ENCODE measurements at regions of chr20 and their contacts with region 1.

Region 1: GRCh38 chr20:5749952-5750779 is at the start of gene SHLD1:
- DNase-seq: peak; percentile 83 to 96
- H3K4me3 ChIP-seq: peak within 1 kb of the TSS; percentile 64 to 70 (median 67)
- H3K27ac ChIP-seq: peak within 1 kb of the TSS; percentile 75 to 94 (median 93)
- H3K4me1 ChIP-seq: peaks cover 8 to 20% (median 13%) of the 10 kb centered on the region in 4 donors
- H3K27me3 ChIP-seq: no peaks in the 10 kb centered on the region
- CTCF ChIP-seq: no peak
- EP300 ChIP-seq: no peak
- POLR2A ChIP-seq: no peak
- total RNA-seq, gene SHLD1: 1.3 to 3.5 (median 2.4) TPM in 4 of 5 donors, not detected in the other

Region 2: DNA sequence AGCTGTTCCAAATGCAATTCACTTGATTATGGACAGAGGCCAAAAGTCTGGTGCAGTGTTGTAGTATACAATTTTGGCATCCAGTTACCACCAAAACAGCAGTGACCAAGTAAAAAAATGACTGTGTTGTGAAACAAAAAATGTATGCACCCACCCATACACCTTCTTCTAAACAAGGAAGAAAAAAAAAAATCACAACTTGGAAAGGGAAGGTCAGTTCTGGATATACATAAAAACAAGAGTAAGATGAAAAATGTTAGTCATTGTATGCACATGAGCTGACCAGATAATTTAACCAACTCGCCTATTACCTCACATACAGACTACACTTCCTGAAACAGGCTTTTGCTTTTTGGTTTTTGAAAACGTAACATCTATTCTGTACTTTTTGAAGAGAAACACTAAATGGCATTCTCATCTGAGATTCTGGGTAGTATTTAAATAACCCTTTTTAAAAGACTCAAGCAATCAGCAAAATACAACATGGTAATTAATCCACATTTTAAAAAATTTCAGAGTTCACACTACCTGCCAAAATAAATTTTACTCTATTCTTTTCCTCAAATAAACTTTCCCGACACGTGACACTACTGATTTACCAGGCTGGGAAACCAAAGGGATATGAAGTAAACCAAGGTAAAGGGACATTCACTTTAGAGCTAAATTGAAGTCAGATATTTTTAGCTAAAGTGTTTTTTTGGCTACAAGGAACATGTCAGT is 141.6 kb before region 1 on chr20:
- intact Hi-C with region 1: loop called (anchors 10 kb)
- DNase-seq: peak in 1 of 2 donors; percentile 52
- H3K4me3 ChIP-seq: peak overlapping the region; percentile 18 to 88 (median 60)
- H3K27ac ChIP-seq: peak overlapping the region in 4 of 5 donors; percentile 94 to 97 (median 96)
- H3K4me1 ChIP-seq: peaks cover 24 to 58% (median 40%) of the 10 kb centered on the region in 4 donors
- H3K27me3 ChIP-seq: no peaks in the 10 kb centered on the region
- CTCF ChIP-seq: no peak
- EP300 ChIP-seq: no peak
- POLR2A ChIP-seq: no peak

Region 3: GRCh38 chr20:5835321-5835821 is 85.2 kb after region 1 on chr20:
- intact Hi-C with region 1: no loop called
- DNase-seq: peak in 1 of 2 donors; percentile 72
- H3K4me3 ChIP-seq: no peak overlapping the region
- H3K27ac ChIP-seq: no peak overlapping the region
- H3K4me1 ChIP-seq: peaks cover 6 to 15% (median 9%) of the 10 kb centered on the region in 4 donors
- H3K27me3 ChIP-seq: no peaks in the 10 kb centered on the region
- CTCF ChIP-seq: no peak
- EP300 ChIP-seq: no peak
- POLR2A ChIP-seq: no peak